IMR-90 (cell line): ENCODE measurements at regions of chr13 and their contacts with region 1.

Region 1: DNA sequence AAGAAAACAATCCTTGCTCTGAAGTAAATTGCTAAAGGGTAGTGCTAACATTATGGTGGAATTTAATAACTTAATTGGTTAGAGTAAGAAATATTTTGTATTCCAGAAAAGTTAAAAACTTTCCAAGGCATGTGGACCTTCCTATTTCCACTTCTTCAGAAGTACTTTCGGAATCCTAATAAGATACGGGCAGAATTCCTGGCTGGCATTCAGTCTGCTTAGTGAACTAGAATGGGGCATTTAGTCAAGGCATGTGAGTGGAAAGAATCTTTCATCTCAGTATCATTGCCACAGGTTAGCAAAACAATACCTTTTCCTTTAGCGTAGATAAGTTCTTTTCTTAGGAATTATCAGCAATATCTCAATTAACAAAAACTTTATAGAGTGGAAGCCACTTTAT is 85.1 kb downstream of the TNFRSF19 start:
- DNase-seq: no peak
- ATAC-seq: no peak
- H3K4me3 ChIP-seq: no peak overlapping the region
- H3K27ac ChIP-seq: no peak overlapping the region
- H3K4me1 ChIP-seq: peaks cover 22% of the 10 kb centered on the region
- H3K27me3 ChIP-seq: no peaks in the 10 kb centered on the region
- CTCF ChIP-seq: no peak
- POLR2A ChIP-seq: no peak
- RAD21 ChIP-seq: no peak

Region 2: DNA sequence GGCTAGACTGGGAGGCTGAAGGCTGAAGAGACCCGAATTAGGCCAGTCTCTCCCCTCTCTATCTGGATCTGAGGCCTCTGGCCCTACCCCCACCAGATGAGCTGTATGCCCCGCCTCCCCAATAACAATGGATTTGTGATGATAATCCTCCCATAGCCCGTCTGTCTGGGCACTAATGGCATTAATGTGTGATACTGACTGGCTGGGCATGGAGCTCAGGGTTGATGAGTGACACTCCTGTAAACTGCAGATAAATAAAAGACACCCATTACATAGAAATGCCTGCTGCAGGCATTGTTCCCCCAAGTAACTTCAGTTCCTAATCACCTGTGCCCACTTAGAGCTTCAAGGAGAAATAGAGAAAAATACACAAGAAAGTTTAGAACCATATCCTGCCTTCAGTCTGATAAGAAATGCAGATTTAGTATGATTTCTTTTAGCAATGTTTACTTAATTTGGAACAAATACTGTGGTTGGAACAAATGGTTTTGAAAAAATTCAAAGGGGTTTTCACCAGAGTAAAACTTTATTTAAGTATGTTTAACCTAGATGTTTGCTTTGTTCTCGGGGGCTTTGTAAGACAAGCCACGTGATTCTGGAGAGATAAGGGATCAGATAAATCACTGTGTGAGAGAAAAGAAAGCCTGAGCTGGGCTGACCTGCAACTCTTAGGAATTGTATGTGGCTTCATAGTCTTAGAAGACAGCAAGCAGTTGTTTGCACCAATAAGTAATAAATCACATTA is 24.8 kb before region 1 on chr13:
- CTCF ChIA-PET with region 1: no interaction called
- POLR2A ChIA-PET with region 1: interaction called, 14 read pairs
- dilution Hi-C with region 1: no loop called
- in situ Hi-C with region 1: no loop called
- intact Hi-C with region 1: no loop called
- DNase-seq: no peak
- ATAC-seq: no peak
- H3K4me3 ChIP-seq: no peak overlapping the region
- H3K27ac ChIP-seq: no peak overlapping the region
- H3K4me1 ChIP-seq: peaks cover 15% of the 10 kb centered on the region
- H3K27me3 ChIP-seq: no peaks in the 10 kb centered on the region
- CTCF ChIP-seq: no peak
- POLR2A ChIP-seq: no peak
- RAD21 ChIP-seq: no peak

Region 3: DNA sequence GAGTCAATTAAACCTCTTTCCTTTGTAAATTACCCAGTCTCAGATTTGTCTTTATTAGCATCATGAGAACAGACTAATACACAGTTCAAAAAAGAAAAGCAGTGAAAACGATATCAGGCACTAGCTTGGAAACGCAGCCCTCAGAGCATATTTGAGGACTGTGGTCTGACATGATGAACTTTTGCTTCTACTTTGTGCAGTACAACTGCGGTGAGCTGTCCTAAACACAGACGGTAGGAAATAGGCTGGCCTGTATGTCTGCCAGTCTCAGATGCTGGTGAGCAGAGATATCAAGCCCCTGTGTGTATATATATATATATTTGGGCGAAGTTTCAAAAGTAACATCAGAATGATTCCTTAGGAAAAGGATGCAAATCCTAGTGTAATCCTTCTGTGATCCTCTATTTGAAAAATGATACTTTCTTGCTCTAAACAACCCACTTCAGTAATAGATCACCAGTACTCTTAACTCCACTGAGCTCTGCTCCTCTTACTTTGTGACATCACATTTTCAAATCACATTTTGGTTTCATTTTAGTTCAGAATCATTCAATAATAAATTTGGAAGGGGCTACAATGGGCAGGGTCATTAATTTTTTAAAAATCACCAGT is 10.7 kb before region 1 on chr13:
- CTCF ChIA-PET with region 1: no interaction called
- POLR2A ChIA-PET with region 1: no interaction called
- dilution Hi-C with region 1: no loop called
- in situ Hi-C with region 1: no loop called
- intact Hi-C with region 1: no loop called
- DNase-seq: peak; percentile 86
- ATAC-seq: peak; percentile 83
- H3K4me3 ChIP-seq: no peak overlapping the region
- H3K27ac ChIP-seq: peak overlapping the region; percentile 54; the same call in 1 of the 2 replicates
- H3K4me1 ChIP-seq: peaks cover 8% of the 10 kb centered on the region
- H3K27me3 ChIP-seq: no peaks in the 10 kb centered on the region
- CTCF ChIP-seq: no peak
- POLR2A ChIP-seq: no peak
- RAD21 ChIP-seq: no peak

Region 4: GRCh38 chr13:23735329-23735728 is 80.0 kb after region 1 on chr13:
- CTCF ChIA-PET with region 1: no interaction called
- POLR2A ChIA-PET with region 1: no interaction called
- dilution Hi-C with region 1: no loop called
- in situ Hi-C with region 1: no loop called
- intact Hi-C with region 1: no loop called
- DNase-seq: no peak
- ATAC-seq: no peak
- H3K4me3 ChIP-seq: no peak overlapping the region
- H3K27ac ChIP-seq: no peak overlapping the region
- H3K4me1 ChIP-seq: no peaks in the 10 kb centered on the region
- H3K27me3 ChIP-seq: no peaks in the 10 kb centered on the region
- CTCF ChIP-seq: no peak
- POLR2A ChIP-seq: no peak
- RAD21 ChIP-seq: no peak